Gastrocnemius medialis (tissue), 4 donors: ENCODE measurements at regions of chr12 and their contacts with region 1.

Region 1: GRCh38 chr12:102484428-102484958 is 4.1 kb upstream of the IGF1 start:
- DNase-seq: peak; percentile 16 to 53
- ATAC-seq: peak; percentile 42 to 63
- H3K4me3 ChIP-seq: peak overlapping the region in 3 of 4 donors; percentile 7 to 34 (median 31)
- H3K27ac ChIP-seq: peak overlapping the region; percentile 4 to 61 (median 18)
- H3K4me1 ChIP-seq: peaks cover 12 to 20% of the 10 kb centered on the region in 2 donors
- H3K27me3 ChIP-seq: no peaks in the 10 kb centered on the region
- CTCF ChIP-seq: peak; percentile 70 to 95 (median 76)
- POLR2A ChIP-seq: no peak

Region 2: DNA sequence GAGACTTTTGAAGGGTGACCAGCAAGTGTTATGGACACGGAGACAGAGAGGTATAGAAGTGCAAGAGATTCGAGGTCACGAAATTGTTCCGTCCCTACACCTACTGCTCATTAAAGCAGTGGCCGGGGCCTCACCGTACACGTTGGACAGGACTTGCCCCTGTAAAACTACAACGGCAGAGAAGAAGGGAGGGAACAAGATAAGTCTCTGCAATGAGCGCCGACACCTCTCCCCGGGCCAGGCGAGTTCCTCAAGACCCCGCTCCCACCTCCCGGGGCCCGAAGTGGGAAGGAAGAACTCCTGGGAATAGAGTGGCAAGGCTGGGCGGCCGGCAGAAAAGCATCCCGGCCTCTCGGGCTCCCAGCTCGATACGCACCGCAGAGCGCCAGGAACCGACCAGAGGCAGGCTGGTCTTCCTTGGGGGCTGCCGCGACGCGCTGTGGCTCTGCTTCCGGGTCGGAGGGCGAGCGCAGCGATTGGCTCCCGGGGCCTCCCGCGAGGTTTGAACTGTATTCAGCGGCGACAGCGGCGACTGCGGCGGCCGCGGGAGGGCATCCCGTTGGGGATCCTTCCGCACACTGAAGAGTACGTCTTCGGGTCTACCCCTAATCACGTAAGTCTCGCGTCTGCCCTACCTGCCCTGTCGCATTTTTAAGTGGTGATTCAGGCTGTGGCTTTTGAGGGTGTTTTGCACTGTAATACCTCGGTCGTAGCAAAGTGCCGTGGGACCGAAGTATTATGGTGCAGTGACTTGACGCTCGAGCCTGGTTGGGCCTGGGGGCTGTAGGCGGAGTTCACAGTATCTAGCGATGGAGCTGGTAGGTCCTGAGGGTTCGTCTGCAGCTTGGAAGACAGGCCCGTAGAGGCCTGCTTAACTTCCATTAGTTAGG is 364.6 kb before region 1 on chr12 and contains the starts of genes NUP37 and PARPBP:
- in situ Hi-C with region 1: no loop called
- intact Hi-C with region 1: loop called (anchors 5 kb)
- DNase-seq: peak; percentile 78 to 81
- ATAC-seq: peak; percentile 96 to 97
- H3K4me3 ChIP-seq: peak within 1 kb of the TSS; percentile 74 to 98 (median 90)
- H3K27ac ChIP-seq: peak within 1 kb of the TSS; percentile 85 to 91 (median 88)
- H3K4me1 ChIP-seq: peaks cover 7 to 16% of the 10 kb centered on the region in 2 donors
- H3K27me3 ChIP-seq: no peaks in the 10 kb centered on the region
- CTCF ChIP-seq: peak in 1 of 5 experiments; percentile 35
- POLR2A ChIP-seq: peak; percentile 45 to 55
- total RNA-seq, gene NUP37: 11.6 to 26.6 (median 19.2) TPM
- total RNA-seq, gene PARPBP: 0.31 to 3.1 (median 0.89) TPM

Region 3: DNA sequence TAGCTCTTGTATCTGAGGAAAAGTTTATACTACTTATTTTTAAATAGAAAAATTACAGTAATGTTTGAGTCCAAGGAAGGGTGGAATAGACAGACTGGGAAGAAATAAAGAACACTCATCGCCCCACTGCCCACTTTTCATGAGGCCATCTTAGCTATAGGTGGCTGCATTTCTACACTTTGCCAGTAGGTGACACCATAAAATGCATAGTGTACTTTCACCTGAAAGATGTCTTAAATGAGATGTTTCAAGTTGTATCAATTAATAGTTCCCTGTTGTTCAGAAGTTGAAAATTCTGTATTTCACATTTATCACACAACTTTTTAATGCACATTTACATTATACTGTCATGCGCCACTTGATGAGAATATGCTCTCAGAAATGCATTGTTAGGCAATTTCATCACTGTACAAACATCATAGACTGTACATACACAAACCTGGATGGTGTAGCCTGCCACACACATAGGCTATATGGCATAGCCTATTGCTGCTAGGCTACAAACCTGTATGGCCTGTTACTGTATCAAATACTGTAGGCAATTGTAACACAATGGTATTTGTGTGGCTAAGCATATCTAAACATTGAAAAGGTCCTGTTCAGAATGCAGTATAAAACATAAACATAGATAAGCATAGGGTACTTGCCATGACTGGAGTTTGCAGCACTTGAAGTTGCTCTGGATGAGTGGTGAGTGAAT is 314.4 kb before region 1 on chr12:
- in situ Hi-C with region 1: loop called (anchors 10 to 25 kb)
- intact Hi-C with region 1: loop called (anchors 1 kb)
- DNase-seq: no peak
- ATAC-seq: peak; percentile 58 to 70
- H3K4me3 ChIP-seq: no peak overlapping the region
- H3K27ac ChIP-seq: no peak overlapping the region
- H3K4me1 ChIP-seq: no peaks in the 10 kb centered on the region
- H3K27me3 ChIP-seq: no peaks in the 10 kb centered on the region
- CTCF ChIP-seq: peak; percentile 50 to 73 (median 61)
- POLR2A ChIP-seq: no peak

Region 4: GRCh38 chr12:102300824-102301461 is 183.6 kb before region 1 on chr12:
- in situ Hi-C with region 1: no loop called
- intact Hi-C with region 1: loop called (anchors 1 kb)
- DNase-seq: no peak
- ATAC-seq: peak in 1 of 2 donors; percentile 61
- H3K4me3 ChIP-seq: peak overlapping the region in 1 of 4 donors; percentile 4
- H3K27ac ChIP-seq: no peak overlapping the region
- H3K4me1 ChIP-seq: no peaks in the 10 kb centered on the region
- H3K27me3 ChIP-seq: no peaks in the 10 kb centered on the region
- CTCF ChIP-seq: no peak
- POLR2A ChIP-seq: no peak

Region 5: GRCh38 chr12:102347811-102348210 is 136.7 kb before region 1 on chr12:
- in situ Hi-C with region 1: no loop called
- intact Hi-C with region 1: loop called (anchors 5 kb)
- DNase-seq: no peak
- ATAC-seq: no peak
- H3K4me3 ChIP-seq: peak overlapping the region in 1 of 4 donors; percentile 35
- H3K27ac ChIP-seq: peak overlapping the region in 3 of 4 donors; percentile 69 to 83 (median 80)
- H3K4me1 ChIP-seq: peaks cover 40 to 47% of the 10 kb centered on the region in 2 donors
- H3K27me3 ChIP-seq: no peaks in the 10 kb centered on the region
- CTCF ChIP-seq: no peak
- POLR2A ChIP-seq: no peak

Region 6: DNA sequence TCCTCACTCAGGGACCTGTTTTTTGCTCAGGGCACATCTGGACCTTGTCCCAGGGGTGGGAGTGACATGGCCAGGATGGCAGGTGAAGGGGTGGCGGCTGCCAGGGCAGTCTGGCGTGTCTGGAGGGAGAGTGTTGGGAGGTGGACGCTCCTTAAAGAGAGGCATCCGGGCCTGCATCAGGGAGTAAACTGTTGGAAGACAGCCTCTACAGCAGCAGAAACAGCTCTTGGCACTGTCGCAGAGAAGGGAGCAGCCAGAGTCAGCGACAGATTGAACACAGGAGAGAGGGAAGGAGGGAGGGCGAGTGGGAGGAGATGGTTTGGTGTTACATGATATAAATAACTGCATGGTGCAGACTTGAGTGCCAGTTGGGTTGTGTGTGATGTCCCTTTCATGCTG is 57.0 kb before region 1 on chr12:
- in situ Hi-C with region 1: no loop called
- intact Hi-C with region 1: loop called (anchors 2 kb)
- DNase-seq: peak; percentile 80 to 89
- ATAC-seq: peak; percentile 84 to 91
- H3K4me3 ChIP-seq: peak overlapping the region in 2 of 4 donors; percentile 10 to 12
- H3K27ac ChIP-seq: peak overlapping the region; percentile 84 to 93 (median 91)
- H3K4me1 ChIP-seq: peaks cover 36 to 39% of the 10 kb centered on the region in 2 donors
- H3K27me3 ChIP-seq: no peaks in the 10 kb centered on the region
- CTCF ChIP-seq: no peak
- POLR2A ChIP-seq: peak in 1 of 2 donors; percentile 31

Region 7: GRCh38 chr12:102793921-102794320 is 309.4 kb after region 1 on chr12:
- in situ Hi-C with region 1: no loop called
- intact Hi-C with region 1: no loop called
- DNase-seq: no peak
- ATAC-seq: no peak
- H3K4me3 ChIP-seq: no peak overlapping the region
- H3K27ac ChIP-seq: no peak overlapping the region
- H3K4me1 ChIP-seq: no peaks in the 10 kb centered on the region
- H3K27me3 ChIP-seq: no peaks in the 10 kb centered on the region
- CTCF ChIP-seq: no peak
- POLR2A ChIP-seq: no peak